ENCODE measurements at regions of chr2 and their contacts with region 1.

Region 1: DNA sequence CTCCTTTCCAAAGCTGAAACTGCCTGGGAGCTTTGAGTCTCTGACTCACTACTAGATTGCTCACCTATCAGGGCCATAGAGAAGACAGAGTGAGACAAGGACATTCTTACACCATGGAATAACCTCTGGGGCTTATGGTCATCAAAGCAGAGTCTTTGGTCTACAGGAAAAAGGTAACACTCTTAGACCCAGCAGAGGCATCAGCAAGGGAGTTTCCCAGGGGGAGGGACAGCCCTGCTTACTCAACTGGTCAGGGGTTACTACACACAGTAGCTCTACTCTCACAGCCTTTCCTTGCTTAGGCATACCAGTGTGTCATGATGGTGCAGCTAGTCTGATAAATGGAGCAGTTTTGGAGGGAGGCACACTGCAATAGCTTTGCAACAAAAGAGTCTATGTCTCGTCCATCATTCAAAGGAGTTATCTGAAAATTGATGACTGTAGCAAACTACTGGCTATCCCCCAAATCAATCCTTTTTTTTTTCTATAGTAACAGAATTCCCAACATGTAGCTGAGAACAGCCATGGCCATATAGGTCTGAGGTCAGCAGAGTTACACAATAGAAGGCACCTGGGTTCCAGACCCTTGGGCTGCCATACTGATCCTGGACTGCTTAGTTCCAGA is 22.4 kb upstream of the CD28 start:
- DNase-seq: peak; percentile 90
- H3K4me3 ChIP-seq: no peak overlapping the region
- H3K27ac ChIP-seq: peak overlapping the region; percentile 98
- H3K4me1 ChIP-seq: peaks cover 52% of the 10 kb centered on the region
- H3K27me3 ChIP-seq: no peaks in the 10 kb centered on the region
- CTCF ChIP-seq: no peak
- POLR2A ChIP-seq: no peak

Region 2: GRCh38 chr2:201813996-201814760 is 1869.9 kb before region 1 on chr2:
- CTCF ChIA-PET with region 1: no interaction called
- POLR2A ChIA-PET with region 1: no interaction called
- dilution Hi-C with region 1: no loop called
- intact Hi-C with region 1: no loop called
- DNase-seq: no peak
- H3K4me3 ChIP-seq: no peak overlapping the region
- H3K27ac ChIP-seq: no peak overlapping the region
- H3K4me1 ChIP-seq: no peaks in the 10 kb centered on the region
- H3K27me3 ChIP-seq: peaks cover 12 to 21% of the 10 kb centered on the region in 2 experiments
- CTCF ChIP-seq: no peak
- POLR2A ChIP-seq: no peak

Region 3: GRCh38 chr2:203238704-203239526 is 445.1 kb before region 1 on chr2 and contains the start of gene CYP20A1:
- CTCF ChIA-PET with region 1: no interaction called
- POLR2A ChIA-PET with region 1: no interaction called
- dilution Hi-C with region 1: no loop called
- intact Hi-C with region 1: loop called (anchors 1 kb)
- DNase-seq: peak; percentile 97
- H3K4me3 ChIP-seq: peak within 1 kb of the TSS; percentile 66 to 99 (median 95)
- H3K27ac ChIP-seq: peak within 1 kb of the TSS; percentile 94
- H3K4me1 ChIP-seq: peaks cover 5% of the 10 kb centered on the region
- H3K27me3 ChIP-seq: no peaks in the 10 kb centered on the region
- CTCF ChIP-seq: peak; percentile 43 to 47
- POLR2A ChIP-seq: peak; percentile 98
- total RNA-seq, gene CYP20A1: 19.7 and 26.5 TPM in 2 replicates

Region 4: DNA sequence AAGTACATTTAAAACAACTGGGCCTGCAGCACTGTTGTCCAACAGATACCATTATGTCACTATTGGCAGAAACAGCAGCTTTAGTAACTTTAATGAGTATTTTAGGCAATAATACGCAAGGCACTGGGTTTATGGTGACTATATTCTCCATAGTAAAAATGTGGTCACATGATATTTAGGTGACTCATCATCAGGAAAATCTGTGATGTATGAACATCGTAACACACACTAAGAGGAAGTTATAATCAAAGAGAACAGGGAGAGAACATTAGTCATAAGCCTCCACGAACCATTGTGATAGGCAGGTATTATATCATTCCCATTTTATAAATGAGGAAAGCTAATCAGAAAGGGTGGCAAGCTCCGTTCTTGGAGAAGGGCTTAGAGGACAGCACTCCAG is 185.9 kb before region 1 on chr2:
- CTCF ChIA-PET with region 1: no interaction called
- POLR2A ChIA-PET with region 1: no interaction called
- dilution Hi-C with region 1: no loop called
- intact Hi-C with region 1: loop called (anchors 5 kb)
- DNase-seq: peak; percentile 71
- H3K4me3 ChIP-seq: no peak overlapping the region
- H3K27ac ChIP-seq: peak overlapping the region; percentile 75
- H3K4me1 ChIP-seq: peaks cover 35% of the 10 kb centered on the region
- H3K27me3 ChIP-seq: no peaks in the 10 kb centered on the region
- CTCF ChIP-seq: no peak
- POLR2A ChIP-seq: no peak

Region 5: GRCh38 chr2:203740780-203741281 is 56.8 kb after region 1 on chr2:
- CTCF ChIA-PET with region 1: no interaction called
- POLR2A ChIA-PET with region 1: no interaction called
- dilution Hi-C with region 1: no loop called
- intact Hi-C with region 1: no loop called
- DNase-seq: no peak
- H3K4me3 ChIP-seq: no peak overlapping the region
- H3K27ac ChIP-seq: no peak overlapping the region
- H3K4me1 ChIP-seq: peaks cover 6% of the 10 kb centered on the region
- H3K27me3 ChIP-seq: no peaks in the 10 kb centered on the region
- CTCF ChIP-seq: no peak
- POLR2A ChIP-seq: no peak

Region 6: DNA sequence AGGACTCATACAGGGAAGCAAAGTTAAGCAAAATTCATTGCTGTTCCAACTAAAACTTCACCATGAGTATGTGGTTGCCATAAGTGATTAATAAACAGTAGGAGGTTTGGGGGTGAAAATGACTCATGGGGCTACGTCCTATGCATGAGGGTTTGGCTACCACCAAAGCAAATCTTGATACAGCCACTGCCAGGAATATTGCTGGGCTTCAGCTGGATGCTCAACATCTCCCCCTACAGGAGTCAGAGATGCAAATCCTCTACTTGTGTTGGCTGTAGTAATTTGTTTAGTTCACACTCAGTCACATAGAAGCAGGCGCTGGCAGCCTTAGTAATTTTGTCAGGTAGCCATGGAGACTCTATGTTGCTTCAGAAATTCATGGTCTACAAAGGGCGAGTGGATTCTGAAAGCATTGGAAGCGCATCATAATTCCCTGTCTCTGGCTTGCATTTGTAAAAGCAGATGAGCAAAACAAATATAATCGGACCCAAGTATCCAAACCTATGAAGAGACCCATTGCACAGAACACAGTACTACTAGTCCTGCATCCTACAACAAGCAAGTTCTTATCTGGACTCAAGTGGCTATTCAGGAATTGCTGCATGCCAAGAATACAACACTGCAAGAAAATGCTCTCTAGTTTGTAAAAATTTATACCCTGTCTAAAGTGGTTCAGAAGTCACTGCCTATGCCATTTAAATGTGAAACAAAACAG is 98.4 kb after region 1 on chr2:
- CTCF ChIA-PET with region 1: interaction called, 4 read pairs
- POLR2A ChIA-PET with region 1: no interaction called
- dilution Hi-C with region 1: no loop called
- intact Hi-C with region 1: loop called (anchors 2 kb)
- DNase-seq: peak; percentile 90
- H3K4me3 ChIP-seq: no peak overlapping the region
- H3K27ac ChIP-seq: no peak overlapping the region
- H3K4me1 ChIP-seq: peaks cover 18% of the 10 kb centered on the region
- H3K27me3 ChIP-seq: no peaks in the 10 kb centered on the region
- CTCF ChIP-seq: peak; percentile 74 to 77
- POLR2A ChIP-seq: no peak

Region 7: GRCh38 chr2:203878063-203878462 is 194.0 kb after region 1 on chr2:
- CTCF ChIA-PET with region 1: no interaction called
- POLR2A ChIA-PET with region 1: no interaction called
- dilution Hi-C with region 1: no loop called
- intact Hi-C with region 1: no loop called
- DNase-seq: no peak
- H3K4me3 ChIP-seq: no peak overlapping the region
- H3K27ac ChIP-seq: no peak overlapping the region
- H3K4me1 ChIP-seq: no peaks in the 10 kb centered on the region
- H3K27me3 ChIP-seq: peaks cover 4 to 10% of the 10 kb centered on the region in 2 experiments
- CTCF ChIP-seq: no peak
- POLR2A ChIP-seq: no peak